ENCODE measurements at regions of chr16 and their contacts with region 1.

Region 1: GRCh38 chr16:85592700-85593493 is 20.2 kb upstream of the GSE1 start:
- DNase-seq: no peak
- H3K4me3 ChIP-seq: no peak overlapping the region
- CTCF ChIP-seq: no peak

Region 2: DNA sequence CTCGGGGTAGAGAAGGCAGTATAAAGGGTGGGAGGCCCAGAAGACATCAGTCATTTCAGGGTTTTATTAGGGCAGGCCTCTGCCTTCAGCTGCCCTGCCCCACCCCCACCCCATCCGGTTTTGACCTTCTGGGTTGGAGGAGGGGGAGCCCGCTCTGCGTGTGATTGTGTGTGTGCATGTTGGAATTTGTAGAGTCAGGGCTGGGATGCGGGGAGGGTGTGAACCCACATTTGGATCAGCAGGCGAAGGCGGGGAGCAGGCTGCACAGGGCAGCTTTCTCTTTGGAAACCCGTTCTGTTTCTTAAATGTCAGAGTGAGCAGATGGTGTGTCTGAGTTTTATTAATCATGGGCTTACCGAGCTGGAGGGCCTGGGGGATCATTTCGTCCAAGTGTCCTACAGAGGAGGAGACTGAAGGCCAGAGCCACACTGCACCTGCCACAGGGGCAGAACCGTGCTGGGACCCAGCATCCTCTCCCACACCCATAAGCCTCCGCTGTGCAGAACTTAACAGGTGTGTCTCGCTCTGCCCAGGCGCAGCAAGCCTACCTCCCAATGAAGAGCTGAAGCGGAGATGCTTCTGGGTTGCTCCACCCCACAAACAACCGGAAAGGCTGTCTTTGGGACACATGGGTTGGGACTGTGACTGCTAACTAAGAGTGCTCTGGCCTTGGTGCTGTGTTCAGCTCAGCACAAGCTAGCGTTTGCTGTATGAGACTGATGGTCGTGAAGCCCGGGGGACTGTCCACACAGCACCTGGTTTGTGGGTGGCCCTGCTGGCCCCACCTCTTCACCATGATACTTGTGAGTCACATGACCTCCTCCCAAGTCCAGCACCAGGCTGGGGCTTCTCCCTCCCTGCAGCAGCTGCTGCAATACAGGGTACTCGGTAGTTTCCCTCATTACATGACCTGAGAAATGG is 50.7 kb before region 1 on chr16:
- in situ Hi-C with region 1: loop called (anchors 5 kb)
- DNase-seq: no peak
- H3K4me3 ChIP-seq: no peak overlapping the region
- CTCF ChIP-seq: no peak

Region 3: GRCh38 chr16:85675251-85675927 is 82.5 kb after region 1 on chr16:
- in situ Hi-C with region 1: no loop called
- DNase-seq: peak; percentile 23
- H3K4me3 ChIP-seq: no peak overlapping the region
- CTCF ChIP-seq: peak; percentile 68